H1 (cell line): ENCODE measurements at regions of chr14 and their contacts with region 1.

Region 1: GRCh38 chr14:95993768-95994592 is 45.2 kb upstream of the C14orf132 start:
- DNase-seq: peak; percentile 60 to 78
- H3K4me3 ChIP-seq: peak overlapping the region in 2 of 4 experiments; percentile 1 to 4; a peak in 2 of 8 replicates
- H3K27ac ChIP-seq: peak overlapping the region; percentile 30; the same call in 1 of the 2 replicates
- H3K4me1 ChIP-seq: peaks cover 7 to 17% (median 11%) of the 10 kb centered on the region in 4 experiments
- H3K27me3 ChIP-seq: no peaks in the 10 kb centered on the region
- CTCF ChIP-seq: peak in 2 of 3 experiments; percentile 78 to 87; a peak in 3 of 4 replicates
- EP300 ChIP-seq: no peak; a peak in 1 of 3 replicates
- POLR2A ChIP-seq: no peak
- RAD21 ChIP-seq: peak; percentile 96 to 97

Region 2: GRCh38 chr14:95561001-95561412 is 433.0 kb before region 1 on chr14:
- CTCF ChIA-PET with region 1: interaction called, 104 read pairs
- POLR2A ChIA-PET with region 1: no interaction called
- DNase-seq: peak; percentile 83 to 98
- H3K4me3 ChIP-seq: no peak overlapping the region
- H3K27ac ChIP-seq: no peak overlapping the region
- H3K4me1 ChIP-seq: peaks cover 0 to 5% (median 4%) of the 10 kb centered on the region in 4 experiments; a peak in 6 of 7 replicates
- H3K27me3 ChIP-seq: no peaks in the 10 kb centered on the region; a peak in 2 of 7 replicates
- CTCF ChIP-seq: peak; percentile 99 to 100 (median 99)
- EP300 ChIP-seq: peak in 1 of 2 experiments; percentile 31; a peak in 1 of 3 replicates
- POLR2A ChIP-seq: no peak
- RAD21 ChIP-seq: peak; percentile 100

Region 3: DNA sequence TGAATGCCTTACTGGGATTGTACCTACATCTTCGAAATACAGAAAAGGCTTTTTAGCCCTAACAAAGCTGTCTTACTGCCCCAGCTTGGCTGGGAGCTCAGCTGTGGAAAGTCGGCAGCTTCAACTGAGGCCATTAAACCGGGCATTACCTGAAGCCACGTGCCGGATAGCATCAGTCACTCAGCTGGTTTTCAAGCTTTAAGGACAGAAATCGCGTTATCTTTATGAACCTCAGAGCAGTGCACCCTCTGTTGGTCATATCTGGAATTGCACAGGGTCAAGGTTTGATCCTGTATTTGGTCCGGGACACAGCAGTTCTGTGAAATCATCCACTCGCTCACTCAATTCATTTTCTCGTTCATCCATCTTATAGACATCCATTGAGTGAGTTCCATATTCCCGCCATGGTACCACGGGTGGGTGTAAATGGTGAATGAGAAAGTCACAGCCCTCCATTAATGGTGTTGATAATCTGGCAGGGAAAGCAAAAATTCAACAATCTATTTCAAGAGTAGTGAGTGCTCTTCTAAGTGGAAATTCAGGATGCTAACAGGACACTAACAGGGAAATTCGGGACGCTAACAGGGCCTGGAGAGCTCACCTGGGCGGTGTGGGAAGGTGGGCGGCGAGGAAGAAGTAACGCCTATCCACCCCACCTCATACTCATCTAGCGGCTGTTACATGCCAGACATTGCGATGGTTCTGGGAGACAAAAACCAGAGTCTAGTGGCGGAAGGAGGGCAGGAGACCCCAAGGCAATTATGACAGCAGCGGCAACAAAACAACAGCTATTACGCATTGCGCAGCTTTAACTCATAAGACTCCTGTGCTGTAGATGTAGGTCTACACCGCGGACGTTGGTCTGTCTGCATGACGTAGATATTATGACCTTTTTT is 219.5 kb before region 1 on chr14:
- CTCF ChIA-PET with region 1: interaction called, 13 read pairs
- POLR2A ChIA-PET with region 1: no interaction called
- DNase-seq: peak in 1 of 2 experiments; percentile 87
- H3K4me3 ChIP-seq: no peak overlapping the region
- H3K27ac ChIP-seq: no peak overlapping the region
- H3K4me1 ChIP-seq: peaks cover 0 to 4% (median 0%) of the 10 kb centered on the region in 4 experiments; a peak in 2 of 7 replicates
- H3K27me3 ChIP-seq: peaks cover 0 to 19% (median 9%) of the 10 kb centered on the region in 4 experiments; a peak in 4 of 7 replicates
- CTCF ChIP-seq: peak; percentile 49 to 92 (median 69)
- EP300 ChIP-seq: no peak
- POLR2A ChIP-seq: no peak
- RAD21 ChIP-seq: peak; percentile 75 to 83

Region 4: DNA sequence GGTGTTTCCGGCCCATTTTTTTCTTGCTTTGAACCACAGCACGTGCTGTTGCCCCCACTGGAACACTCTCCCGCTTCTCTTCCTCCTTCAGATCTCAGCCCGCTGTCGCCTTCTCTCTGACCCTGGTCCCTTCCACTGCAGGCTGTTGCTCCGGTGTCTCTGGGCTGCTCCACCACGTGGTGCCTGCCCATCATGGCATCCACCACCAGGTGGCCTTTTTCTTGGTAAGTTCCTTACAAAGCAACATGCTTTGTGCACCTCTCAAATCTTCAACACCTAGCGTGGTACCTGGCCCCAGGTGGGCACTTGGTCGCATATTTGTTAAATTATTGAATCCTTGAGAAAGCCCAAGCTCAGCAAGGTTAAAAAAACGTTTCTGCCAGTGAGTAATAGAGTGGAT is 98.3 kb before region 1 on chr14:
- CTCF ChIA-PET with region 1: interaction called, 49 read pairs
- POLR2A ChIA-PET with region 1: interaction called, 12 read pairs
- DNase-seq: peak; percentile 34 to 77
- H3K4me3 ChIP-seq: no peak overlapping the region
- H3K27ac ChIP-seq: no peak overlapping the region
- H3K4me1 ChIP-seq: peaks cover 8 to 19% (median 17%) of the 10 kb centered on the region in 4 experiments
- H3K27me3 ChIP-seq: no peaks in the 10 kb centered on the region
- CTCF ChIP-seq: peak; percentile 68 to 75 (median 72)
- EP300 ChIP-seq: no peak
- POLR2A ChIP-seq: no peak
- RAD21 ChIP-seq: peak; percentile 46 to 71

Region 5: DNA sequence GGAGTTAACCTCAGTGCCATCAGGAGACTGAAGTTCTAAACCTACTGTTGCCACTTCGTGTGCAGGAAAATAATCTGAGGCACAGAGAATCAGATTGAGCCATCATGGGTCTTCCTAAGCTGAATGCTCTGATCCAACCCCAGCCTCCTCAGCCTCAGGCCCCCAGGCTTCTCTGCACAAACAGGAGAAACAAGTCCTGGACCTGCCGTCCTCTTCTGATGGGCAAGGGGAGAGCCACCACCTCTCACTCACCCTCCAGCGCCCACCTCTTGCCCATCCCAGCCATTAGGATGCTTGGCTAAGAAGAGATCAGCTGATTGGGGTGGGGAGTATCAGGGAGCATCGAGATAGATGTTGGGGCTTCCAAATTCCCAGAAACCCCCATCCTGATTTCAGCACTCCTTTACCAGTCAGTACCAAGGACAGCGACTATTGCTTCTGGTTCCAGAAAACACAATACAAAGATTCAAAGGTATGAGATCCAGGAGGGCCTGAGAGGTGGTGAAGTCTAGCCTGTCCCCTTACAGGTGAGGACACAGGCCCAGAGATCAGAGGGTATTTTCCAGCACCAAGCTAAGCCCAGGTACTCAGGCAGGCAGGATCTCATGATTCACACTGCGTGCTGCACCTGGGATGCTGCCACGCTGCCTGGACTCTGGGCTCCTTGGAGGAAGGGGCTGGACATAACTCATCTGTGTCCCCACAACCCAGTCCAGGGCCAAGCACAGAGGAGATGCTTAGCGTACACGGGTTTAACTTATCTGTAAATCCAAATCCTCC is 40.8 kb before region 1 on chr14:
- CTCF ChIA-PET with region 1: interaction called, 9 read pairs
- POLR2A ChIA-PET with region 1: interaction called, 18 read pairs
- DNase-seq: peak in 1 of 2 experiments; percentile 54
- H3K4me3 ChIP-seq: no peak overlapping the region
- H3K27ac ChIP-seq: no peak overlapping the region
- H3K4me1 ChIP-seq: peaks cover 0 to 15% (median 9%) of the 10 kb centered on the region in 4 experiments; a peak in 4 of 7 replicates
- H3K27me3 ChIP-seq: no peaks in the 10 kb centered on the region
- CTCF ChIP-seq: no peak
- EP300 ChIP-seq: no peak
- POLR2A ChIP-seq: no peak
- RAD21 ChIP-seq: no peak

Region 6: GRCh38 chr14:96100161-96101029 is 106.4 kb after region 1 on chr14:
- CTCF ChIA-PET with region 1: interaction called, 29 read pairs
- POLR2A ChIA-PET with region 1: no interaction called
- DNase-seq: peak; percentile 66 to 96
- H3K4me3 ChIP-seq: no peak overlapping the region
- H3K27ac ChIP-seq: no peak overlapping the region
- H3K4me1 ChIP-seq: peaks cover 1 to 9% (median 5%) of the 10 kb centered on the region in 4 experiments
- H3K27me3 ChIP-seq: no peaks in the 10 kb centered on the region
- CTCF ChIP-seq: peak; percentile 86 to 100 (median 93)
- EP300 ChIP-seq: no peak; a peak in 1 of 3 replicates
- POLR2A ChIP-seq: no peak
- RAD21 ChIP-seq: peak; percentile 99 to 100

Region 7: GRCh38 chr14:96126339-96126782 is 132.4 kb after region 1 on chr14:
- CTCF ChIA-PET with region 1: no interaction called
- POLR2A ChIA-PET with region 1: no interaction called
- DNase-seq: no peak
- H3K4me3 ChIP-seq: no peak overlapping the region
- H3K27ac ChIP-seq: no peak overlapping the region
- H3K4me1 ChIP-seq: no peaks in the 10 kb centered on the region
- H3K27me3 ChIP-seq: peaks cover 0 to 15% (median 6%) of the 10 kb centered on the region in 4 experiments; a peak in 4 of 7 replicates
- CTCF ChIP-seq: no peak
- EP300 ChIP-seq: no peak
- POLR2A ChIP-seq: no peak
- RAD21 ChIP-seq: no peak